Posterior vena cava (tissue), 2 donors: ENCODE measurements at regions of chr15 and their contacts with region 1.

Region 1: GRCh38 chr15:80856809-80857377 is 77.7 kb downstream of the CEMIP start:
- DNase-seq: no peak

Region 2: DNA sequence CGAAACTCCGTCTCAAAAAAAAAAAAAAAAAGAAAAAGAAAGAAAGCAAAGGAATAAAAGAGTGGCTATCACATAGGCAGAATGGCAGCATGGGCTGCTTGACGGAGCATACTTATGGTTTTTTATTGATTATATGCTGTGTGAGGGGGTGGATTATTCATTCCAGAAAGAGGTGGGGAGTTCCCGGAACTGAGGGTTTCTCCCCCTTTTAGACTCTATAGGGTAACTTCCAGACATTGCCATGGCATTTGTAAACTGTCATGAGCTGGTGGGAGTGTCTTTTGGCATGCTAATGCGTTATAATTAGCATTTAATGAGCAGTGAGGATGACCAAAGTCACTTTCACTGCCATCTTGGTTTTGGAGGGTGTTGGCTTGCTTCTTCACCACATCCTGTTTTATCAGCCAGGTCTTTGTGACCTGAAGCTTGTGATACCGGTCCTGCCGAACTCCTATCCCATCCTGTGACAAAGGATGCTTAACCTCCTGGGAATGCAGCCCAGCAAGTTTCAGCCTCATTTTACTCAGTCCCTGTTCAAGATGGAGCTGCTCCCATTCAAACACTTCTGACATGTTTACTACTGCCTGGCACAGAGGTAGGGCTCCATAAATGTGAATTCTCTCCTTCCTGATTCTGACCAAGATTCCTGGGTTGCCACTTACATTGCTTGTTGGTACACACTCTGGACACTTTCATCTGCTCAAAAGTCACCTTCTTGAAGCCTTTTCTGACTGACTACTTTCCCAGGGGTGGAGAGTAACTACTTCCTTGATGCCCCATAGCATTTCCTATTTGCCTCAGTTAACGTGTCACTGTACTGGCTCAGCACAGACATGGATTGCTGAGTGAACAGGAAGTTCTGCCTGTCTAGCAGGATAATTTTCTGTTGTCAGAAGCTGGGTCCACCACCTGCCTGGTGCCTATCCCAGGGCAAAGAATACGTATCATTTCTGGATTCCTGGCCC is 177.4 kb before region 1 on chr15:
- intact Hi-C with region 1: loop called in 1 of 2 experiments (anchors 5 kb)
- DNase-seq: no peak

Region 3: DNA sequence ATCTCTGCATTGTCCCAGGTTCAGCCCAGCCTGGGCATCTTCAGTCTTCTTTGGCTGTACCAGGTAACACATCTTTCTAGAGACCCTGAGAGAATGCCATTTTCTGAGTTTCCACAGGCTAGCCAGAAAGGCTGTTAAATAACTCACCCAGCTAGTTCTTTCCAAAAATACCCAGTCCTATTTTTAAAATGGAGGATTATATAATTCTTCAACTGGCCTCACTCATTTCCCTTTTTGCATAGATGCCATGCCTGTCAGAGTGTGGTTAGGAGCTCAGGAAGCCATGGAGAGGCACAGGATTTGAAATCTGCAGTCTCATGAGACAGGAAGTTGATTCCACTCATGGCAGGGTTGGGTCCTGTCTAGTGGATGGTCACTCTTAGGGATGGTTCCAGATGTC is 37.9 kb before region 1 on chr15:
- intact Hi-C with region 1: loop called in 1 of 2 experiments (anchors 1 kb)
- DNase-seq: no peak

Region 4: GRCh38 chr15:80835338-80835737 is 21.6 kb before region 1 on chr15:
- intact Hi-C with region 1: no loop called
- DNase-seq: no peak

Region 5: GRCh38 chr15:81098861-81099651 is 242.2 kb after region 1 on chr15:
- intact Hi-C with region 1: no loop called
- DNase-seq: peak; percentile 83

Region 6: DNA sequence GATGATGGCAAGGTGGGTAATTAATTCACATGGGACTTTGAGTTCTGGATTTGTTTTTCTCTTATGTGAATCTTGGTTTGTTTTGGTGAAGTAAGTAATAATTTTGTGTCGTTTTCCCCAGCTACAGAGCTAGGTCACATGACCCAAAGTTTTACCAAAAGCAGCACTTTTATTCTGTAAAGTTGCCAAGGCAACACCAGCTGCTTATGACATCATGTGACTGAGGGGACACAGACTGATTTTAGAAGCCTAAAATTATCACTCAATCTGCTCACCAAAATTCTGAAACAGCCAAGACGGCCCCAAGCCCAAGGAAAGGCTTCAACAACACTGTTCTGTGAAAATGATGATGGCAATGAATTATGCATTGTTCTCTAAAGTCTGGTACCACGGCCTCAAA is 1125.0 kb after region 1 on chr15:
- intact Hi-C with region 1: loop called in 1 of 2 experiments (anchors 5 kb)
- DNase-seq: no peak